IMR-90 (cell line): ENCODE measurements at regions of chr17 and their contacts with region 1.

Region 1: GRCh38 chr17:77999413-78000173 is 41.1 kb downstream of the TNRC6C start:
- DNase-seq: peak; percentile 44
- ATAC-seq: no peak; the same call in none of the 2 replicates
- H3K4me3 ChIP-seq: no peak overlapping the region
- H3K27ac ChIP-seq: peak overlapping the region; percentile 56; the same call in 1 of the 2 replicates
- H3K4me1 ChIP-seq: peaks cover 13% of the 10 kb centered on the region
- H3K27me3 ChIP-seq: no peaks in the 10 kb centered on the region
- CTCF ChIP-seq: no peak
- POLR2A ChIP-seq: no peak
- RAD21 ChIP-seq: no peak

Region 2: DNA sequence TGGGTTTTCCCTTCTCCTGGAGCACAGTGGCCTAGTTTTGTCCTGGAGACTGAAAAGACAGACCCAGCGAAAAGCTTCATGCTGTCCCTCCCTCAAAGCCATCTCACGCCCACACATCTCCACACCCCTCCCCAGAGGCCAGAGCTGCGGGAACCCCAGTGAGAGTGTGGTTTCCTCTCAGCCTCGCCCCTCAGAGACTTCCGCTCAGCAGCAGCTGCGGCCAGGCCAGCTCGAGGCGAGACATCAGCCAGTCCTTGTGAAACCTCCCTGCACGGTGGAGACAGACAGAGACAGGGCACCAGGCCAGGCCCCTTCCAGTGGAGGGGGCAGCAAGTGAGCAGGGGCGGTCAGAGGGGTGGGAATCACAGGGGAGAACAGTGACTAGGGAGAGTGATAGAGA is 118.0 kb before region 1 on chr17:
- CTCF ChIA-PET with region 1: no interaction called
- POLR2A ChIA-PET with region 1: no interaction called
- dilution Hi-C with region 1: no loop called
- in situ Hi-C with region 1: no loop called
- intact Hi-C with region 1: no loop called
- DNase-seq: peak; percentile 28
- ATAC-seq: peak; percentile 63
- H3K4me3 ChIP-seq: no peak overlapping the region
- H3K27ac ChIP-seq: no peak overlapping the region
- H3K4me1 ChIP-seq: no peaks in the 10 kb centered on the region
- H3K27me3 ChIP-seq: peaks cover 28% of the 10 kb centered on the region; the same call in 1 of the 2 replicates
- CTCF ChIP-seq: no peak
- POLR2A ChIP-seq: no peak
- RAD21 ChIP-seq: no peak

Region 3: GRCh38 chr17:77957857-77958715 is 41.5 kb before region 1 on chr17 and contains the start of gene TNRC6C:
- CTCF ChIA-PET with region 1: interaction called, 3 read pairs
- POLR2A ChIA-PET with region 1: no interaction called
- dilution Hi-C with region 1: no loop called
- in situ Hi-C with region 1: no loop called
- intact Hi-C with region 1: loop called (anchors 2 kb)
- DNase-seq: peak; percentile 99
- ATAC-seq: peak; percentile 94
- H3K4me3 ChIP-seq: peak within 1 kb of the TSS; percentile 70
- H3K27ac ChIP-seq: no peak within 1 kb of the TSS; the same call in 1 of the 2 replicates
- H3K4me1 ChIP-seq: no peaks in the 10 kb centered on the region; the same call in 1 of the 2 replicates
- H3K27me3 ChIP-seq: peaks cover 38% of the 10 kb centered on the region
- CTCF ChIP-seq: peak; percentile 17; the same call in 1 of the 2 replicates
- POLR2A ChIP-seq: peak; percentile 100
- RAD21 ChIP-seq: no peak
- total RNA-seq, gene TNRC6C: 2.7 and 3.6 TPM in 2 replicates